Prostate gland (tissue), 2 donors: ENCODE measurements at regions of chr1 and their contacts with region 1.

Region 1: GRCh38 chr1:44213222-44214112 is at the start of gene DMAP1:
- DNase-seq: peak; percentile 73
- H3K4me3 ChIP-seq: peak within 1 kb of the TSS; percentile 62 to 73
- H3K27ac ChIP-seq: peak within 1 kb of the TSS; percentile 67 to 76
- H3K4me1 ChIP-seq: peaks cover 8% of the 10 kb centered on the region
- H3K27me3 ChIP-seq: no peaks in the 10 kb centered on the region
- CTCF ChIP-seq: peak in 2 of 4 experiments; percentile 40 to 47
- POLR2A ChIP-seq: peak; percentile 32
- total RNA-seq, gene DMAP1: 50.6 to 84.0 TPM

Region 2: GRCh38 chr1:44294588-44295007 is 81.1 kb after region 1 on chr1:
- intact Hi-C with region 1: loop called (anchors 10 kb)
- DNase-seq: no peak
- H3K4me3 ChIP-seq: no peak overlapping the region
- H3K27ac ChIP-seq: no peak overlapping the region
- H3K4me1 ChIP-seq: no peaks in the 10 kb centered on the region
- H3K27me3 ChIP-seq: no peaks in the 10 kb centered on the region
- CTCF ChIP-seq: peak in 2 of 4 experiments; percentile 15 to 24
- POLR2A ChIP-seq: no peak

Region 3: GRCh38 chr1:44318097-44319088 is 104.9 kb after region 1 on chr1:
- intact Hi-C with region 1: loop called (anchors 2 kb)
- DNase-seq: no peak
- H3K4me3 ChIP-seq: no peak overlapping the region
- H3K27ac ChIP-seq: no peak overlapping the region
- H3K4me1 ChIP-seq: no peaks in the 10 kb centered on the region
- H3K27me3 ChIP-seq: no peaks in the 10 kb centered on the region
- CTCF ChIP-seq: peak; percentile 40 to 80 (median 60)
- POLR2A ChIP-seq: no peak

Region 4: GRCh38 chr1:44339731-44340130 is 126.3 kb after region 1 on chr1:
- intact Hi-C with region 1: no loop called
- DNase-seq: no peak
- H3K4me3 ChIP-seq: no peak overlapping the region
- H3K27ac ChIP-seq: no peak overlapping the region
- H3K4me1 ChIP-seq: no peaks in the 10 kb centered on the region
- H3K27me3 ChIP-seq: no peaks in the 10 kb centered on the region
- CTCF ChIP-seq: no peak
- POLR2A ChIP-seq: no peak

Region 5: DNA sequence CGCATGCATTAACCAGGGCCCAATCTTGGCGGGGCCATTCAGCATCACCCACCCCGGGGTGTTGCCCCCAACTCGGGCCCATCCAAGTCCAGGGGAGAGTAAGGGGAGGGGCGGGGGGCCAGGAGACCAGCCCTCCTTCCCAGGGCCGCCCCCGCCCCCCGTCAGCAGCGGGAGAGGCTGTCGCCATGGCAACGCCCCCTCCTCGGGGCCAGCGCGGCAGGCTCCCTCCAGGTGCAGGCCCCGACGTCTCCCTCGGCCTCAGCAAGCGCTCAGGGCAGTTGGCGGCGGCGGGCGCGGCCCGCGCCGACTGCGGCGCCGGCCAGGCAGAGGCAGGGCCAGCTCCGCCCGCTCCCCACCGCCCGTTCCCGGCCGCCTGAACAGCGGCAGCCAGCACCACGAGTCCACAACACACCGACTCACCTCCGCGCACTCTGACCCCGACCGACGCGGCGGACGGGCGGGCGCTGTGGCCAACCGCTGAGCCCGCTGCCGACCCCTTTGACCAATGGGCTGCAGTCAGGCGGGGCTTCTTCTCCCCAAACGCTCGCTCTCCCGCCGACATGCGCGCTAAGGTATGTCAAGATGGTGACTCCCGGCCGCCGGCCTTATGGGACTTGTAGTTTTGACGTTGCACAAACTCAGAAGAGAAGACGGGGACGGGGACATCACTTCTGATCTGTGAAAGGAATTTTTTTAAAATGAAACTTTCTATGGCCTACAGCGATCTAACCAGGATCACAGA is 141.5 kb after region 1 on chr1 and contains the start of gene ERI3:
- intact Hi-C with region 1: loop called (anchors 10 kb)
- DNase-seq: peak; percentile 97
- H3K4me3 ChIP-seq: peak within 1 kb of the TSS; percentile 79 to 94
- H3K27ac ChIP-seq: peak within 1 kb of the TSS; percentile 26 to 64
- H3K4me1 ChIP-seq: peaks cover 6% of the 10 kb centered on the region
- H3K27me3 ChIP-seq: no peaks in the 10 kb centered on the region
- CTCF ChIP-seq: peak in 1 of 4 experiments; percentile 10
- POLR2A ChIP-seq: peak; percentile 72
- total RNA-seq, gene ERI3: 84.0 to 114 TPM

Region 6: DNA sequence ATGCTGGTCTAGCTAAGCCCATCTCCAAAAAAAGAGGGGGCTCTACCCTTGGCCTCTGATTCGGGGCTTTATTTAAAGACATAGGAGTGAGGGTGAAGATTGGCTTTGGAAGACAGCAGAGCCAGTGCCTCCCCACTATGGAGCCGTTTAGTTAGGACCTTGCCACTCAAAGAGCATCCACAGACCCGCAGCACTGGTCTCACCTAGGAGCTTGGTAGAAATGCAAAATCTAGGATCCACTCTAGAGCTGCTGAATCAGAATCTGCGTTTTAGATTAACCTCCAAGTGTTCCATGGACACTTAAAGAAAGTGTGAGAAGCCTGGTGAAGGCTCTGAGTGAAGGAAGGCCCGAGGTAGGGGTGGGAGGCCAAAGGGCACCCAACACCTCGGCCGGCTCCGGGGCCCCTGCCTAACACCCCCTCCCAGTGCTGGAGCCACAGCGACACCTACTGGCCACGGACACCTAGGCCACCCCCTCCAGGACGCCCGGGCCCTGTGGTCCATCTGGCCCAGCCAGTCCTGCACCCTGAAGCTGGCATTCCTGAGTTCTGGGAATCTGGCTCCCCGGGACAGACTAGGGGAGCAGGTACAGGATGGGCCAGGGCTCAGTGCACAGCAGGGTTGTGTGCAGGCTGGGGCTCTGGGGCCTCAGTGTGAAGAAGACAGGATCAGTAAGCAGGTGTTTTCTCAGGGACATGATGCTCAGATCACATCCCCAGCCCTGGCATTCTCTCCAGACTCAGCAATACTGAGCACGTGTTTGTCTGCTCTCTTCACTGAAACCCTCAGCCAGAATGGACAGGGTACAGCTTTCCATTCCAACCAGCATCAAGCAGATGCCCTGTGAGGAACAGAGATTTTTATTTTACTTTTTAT is 381.6 kb after region 1 on chr1:
- intact Hi-C with region 1: loop called (anchors 2 kb)
- DNase-seq: peak; percentile 69
- H3K4me3 ChIP-seq: no peak overlapping the region
- H3K27ac ChIP-seq: no peak overlapping the region
- H3K4me1 ChIP-seq: no peaks in the 10 kb centered on the region
- H3K27me3 ChIP-seq: peaks cover 1% of the 10 kb centered on the region
- CTCF ChIP-seq: peak; percentile 93 to 95 (median 95)
- POLR2A ChIP-seq: no peak

Region 7: DNA sequence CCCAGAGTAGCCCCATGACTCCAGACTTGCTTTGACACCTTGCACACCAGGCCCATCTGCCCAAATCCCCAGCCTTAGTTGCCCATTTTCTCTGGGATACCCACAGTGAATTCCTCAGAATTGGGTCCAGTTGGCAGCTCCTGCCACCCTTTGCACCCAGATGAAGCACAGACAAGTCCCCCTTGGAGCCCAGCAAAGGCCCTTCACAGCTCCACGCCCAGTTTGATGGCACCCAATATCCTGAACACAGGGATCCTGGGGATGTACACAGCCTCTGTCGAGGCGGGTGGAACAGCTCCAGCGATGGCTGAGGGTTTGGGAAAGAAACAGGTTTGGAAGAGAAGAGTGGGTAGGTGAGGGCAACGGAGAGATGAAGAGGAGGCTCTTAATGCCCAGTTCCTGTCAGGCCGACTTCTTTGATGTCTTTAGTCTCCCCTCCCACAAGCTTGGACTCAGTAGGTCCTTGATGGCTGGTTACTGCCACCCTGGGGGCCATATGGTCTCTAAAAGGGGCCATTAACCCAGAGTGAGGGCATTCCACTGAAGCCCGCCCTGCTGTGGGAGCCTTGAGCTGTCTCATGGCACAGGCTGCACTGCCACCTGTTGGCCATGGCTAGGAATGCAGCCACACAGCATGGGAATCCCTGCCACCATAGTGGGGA is 439.1 kb after region 1 on chr1:
- intact Hi-C with region 1: loop called (anchors 5 kb)
- DNase-seq: peak; percentile 63
- H3K4me3 ChIP-seq: no peak overlapping the region
- H3K27ac ChIP-seq: no peak overlapping the region
- H3K4me1 ChIP-seq: peaks cover 11% of the 10 kb centered on the region
- H3K27me3 ChIP-seq: no peaks in the 10 kb centered on the region
- CTCF ChIP-seq: peak; percentile 86 to 94 (median 92)
- POLR2A ChIP-seq: no peak